ENCODE measurements at regions of chr12 and their contacts with region 1.

Region 1: GRCh38 chr12:46473634-46474329 is 101.2 kb upstream of the SLC38A2 start:
- DNase-seq: peak; percentile 30 to 92
- H3K4me3 ChIP-seq: peak overlapping the region; percentile 14 to 37
- H3K27ac ChIP-seq: peak overlapping the region; percentile 86 to 93
- H3K4me1 ChIP-seq: peaks cover 4 to 23% of the 10 kb centered on the region in 2 donors
- H3K27me3 ChIP-seq: no peaks in the 10 kb centered on the region
- CTCF ChIP-seq: no peak

Region 2: GRCh38 chr12:46372544-46373110 is 101.2 kb before region 1 on chr12 and contains the start of gene SLC38A2:
- intact Hi-C with region 1: loop called (anchors 5 kb)
- DNase-seq: peak; percentile 90 to 99
- H3K4me3 ChIP-seq: peak within 1 kb of the TSS; percentile 94 to 98
- H3K27ac ChIP-seq: peak within 1 kb of the TSS; percentile 97 to 98
- H3K4me1 ChIP-seq: peaks cover 4 to 15% of the 10 kb centered on the region in 2 donors
- H3K27me3 ChIP-seq: no peaks in the 10 kb centered on the region
- CTCF ChIP-seq: no peak
- total RNA-seq, gene SLC38A2: 384 TPM

Region 3: DNA sequence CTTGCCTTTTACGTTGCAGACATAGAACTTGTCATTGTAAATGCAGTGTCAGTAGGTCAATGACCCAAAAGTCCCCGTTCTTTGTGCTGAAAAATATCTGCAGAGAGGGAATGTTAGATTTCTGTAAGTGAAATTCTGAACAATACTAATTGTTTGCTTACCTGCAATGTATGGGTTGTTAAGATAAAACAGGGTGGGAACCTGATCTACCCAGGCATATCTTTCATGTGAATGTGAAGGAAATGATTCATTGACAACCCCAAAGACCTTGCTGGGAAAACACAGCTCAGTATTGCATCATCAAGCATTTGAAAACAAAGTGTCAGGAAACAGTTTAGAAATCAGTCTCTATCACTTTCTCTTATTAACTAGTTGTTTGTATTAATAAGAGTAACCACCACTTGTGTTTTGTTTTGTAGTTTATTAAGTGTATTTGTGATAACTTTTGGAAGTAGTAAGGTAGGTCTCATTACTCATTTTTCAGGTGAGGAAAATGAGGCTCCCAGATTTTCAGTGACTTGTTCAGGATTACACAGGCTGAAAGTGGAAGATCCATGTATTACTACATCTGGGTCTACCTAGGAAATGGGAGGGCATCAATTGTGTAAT is 43.3 kb before region 1 on chr12:
- intact Hi-C with region 1: loop called (anchors 2 kb)
- DNase-seq: no peak
- H3K4me3 ChIP-seq: no peak overlapping the region
- H3K27ac ChIP-seq: no peak overlapping the region
- H3K4me1 ChIP-seq: peaks cover 0 to 16% of the 10 kb centered on the region in 2 donors
- H3K27me3 ChIP-seq: no peaks in the 10 kb centered on the region
- CTCF ChIP-seq: no peak

Region 4: GRCh38 chr12:46507766-46508165 is 34.0 kb after region 1 on chr12:
- intact Hi-C with region 1: no loop called
- DNase-seq: no peak
- H3K4me3 ChIP-seq: no peak overlapping the region
- H3K27ac ChIP-seq: no peak overlapping the region
- H3K4me1 ChIP-seq: no peaks in the 10 kb centered on the region
- H3K27me3 ChIP-seq: no peaks in the 10 kb centered on the region
- CTCF ChIP-seq: no peak

Region 5: GRCh38 chr12:46608431-46609272 is 134.9 kb after region 1 on chr12:
- intact Hi-C with region 1: loop called (anchors 5 kb)
- DNase-seq: no peak
- H3K4me3 ChIP-seq: no peak overlapping the region
- H3K27ac ChIP-seq: peak overlapping the region; percentile 73 to 87
- H3K4me1 ChIP-seq: peaks cover 0 to 26% of the 10 kb centered on the region in 2 donors
- H3K27me3 ChIP-seq: no peaks in the 10 kb centered on the region
- CTCF ChIP-seq: no peak

Region 6: GRCh38 chr12:46675736-46676135 is 202.0 kb after region 1 on chr12:
- intact Hi-C with region 1: no loop called
- DNase-seq: no peak
- H3K4me3 ChIP-seq: peak overlapping the region in 1 of 2 donors; percentile 37
- H3K27ac ChIP-seq: no peak overlapping the region
- H3K4me1 ChIP-seq: peaks cover 0 to 4% of the 10 kb centered on the region in 2 donors
- H3K27me3 ChIP-seq: no peaks in the 10 kb centered on the region
- CTCF ChIP-seq: peak; percentile 52 to 79 (median 69)

Measured in ascending aorta (tissue), 2 donors.